ENCODE measurements at regions of chr1 and their contacts with region 1.

Region 1: GRCh38 chr1:88180449-88181108 is 503.5 kb upstream of the PKN2 start:
- DNase-seq: peak; percentile 44
- H3K4me3 ChIP-seq: peak overlapping the region in 1 of 2 experiments; percentile 40; a peak in 1 of 4 replicates
- H3K27ac ChIP-seq: no peak overlapping the region
- H3K4me1 ChIP-seq: peaks cover 0 to 2% of the 10 kb centered on the region in 2 experiments; a peak in 2 of 4 replicates
- H3K27me3 ChIP-seq: no peaks in the 10 kb centered on the region
- CTCF ChIP-seq: peak; percentile 98
- EP300 ChIP-seq: no peak
- RAD21 ChIP-seq: peak; percentile 81

Region 2: GRCh38 chr1:88168126-88168525 is 12.5 kb before region 1 on chr1:
- CTCF ChIA-PET with region 1: interaction called, 20 read pairs
- POLR2A ChIA-PET with region 1: no interaction called
- DNase-seq: no peak
- H3K4me3 ChIP-seq: no peak overlapping the region
- H3K27ac ChIP-seq: no peak overlapping the region
- H3K4me1 ChIP-seq: no peaks in the 10 kb centered on the region
- H3K27me3 ChIP-seq: no peaks in the 10 kb centered on the region; the same call in 1 of the 2 replicates
- CTCF ChIP-seq: no peak
- EP300 ChIP-seq: no peak
- RAD21 ChIP-seq: no peak

Region 3: GRCh38 chr1:88191917-88192316 is 11.3 kb after region 1 on chr1:
- CTCF ChIA-PET with region 1: interaction called, 35 read pairs
- POLR2A ChIA-PET with region 1: no interaction called
- DNase-seq: no peak
- H3K4me3 ChIP-seq: no peak overlapping the region
- H3K27ac ChIP-seq: no peak overlapping the region
- H3K4me1 ChIP-seq: no peaks in the 10 kb centered on the region; a peak in 1 of 4 replicates
- H3K27me3 ChIP-seq: no peaks in the 10 kb centered on the region
- CTCF ChIP-seq: no peak
- EP300 ChIP-seq: no peak
- RAD21 ChIP-seq: no peak

Region 4: DNA sequence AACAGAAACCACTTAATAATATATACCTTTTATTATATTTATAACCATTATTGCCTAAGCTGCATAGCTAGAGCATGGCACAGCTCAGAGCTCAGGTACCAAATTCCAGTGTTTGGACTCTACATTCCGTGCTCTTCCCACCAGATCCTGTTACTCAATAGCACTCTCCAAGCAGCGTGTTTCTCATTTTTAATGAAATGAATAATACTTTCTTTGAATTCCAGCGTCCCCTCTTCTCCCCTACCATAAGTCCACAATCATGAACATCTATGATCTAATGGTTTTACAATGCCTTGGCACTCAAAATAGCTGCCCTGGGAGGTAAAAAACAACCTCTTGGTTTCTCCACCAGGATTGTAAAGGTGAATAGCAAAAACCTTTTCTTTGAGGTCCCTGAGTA is 23.5 kb after region 1 on chr1:
- CTCF ChIA-PET with region 1: interaction called, 33 read pairs
- POLR2A ChIA-PET with region 1: no interaction called
- DNase-seq: no peak
- H3K4me3 ChIP-seq: no peak overlapping the region
- H3K27ac ChIP-seq: no peak overlapping the region
- H3K4me1 ChIP-seq: no peaks in the 10 kb centered on the region; a peak in 1 of 4 replicates
- H3K27me3 ChIP-seq: no peaks in the 10 kb centered on the region
- CTCF ChIP-seq: no peak
- EP300 ChIP-seq: no peak
- RAD21 ChIP-seq: no peak

Region 5: GRCh38 chr1:88224906-88225305 is 44.3 kb after region 1 on chr1:
- CTCF ChIA-PET with region 1: interaction called, 12 read pairs
- POLR2A ChIA-PET with region 1: no interaction called
- DNase-seq: no peak
- H3K4me3 ChIP-seq: no peak overlapping the region
- H3K27ac ChIP-seq: no peak overlapping the region
- H3K4me1 ChIP-seq: no peaks in the 10 kb centered on the region; a peak in 2 of 4 replicates
- H3K27me3 ChIP-seq: no peaks in the 10 kb centered on the region
- CTCF ChIP-seq: no peak
- EP300 ChIP-seq: no peak
- RAD21 ChIP-seq: no peak

Measured in SK-N-SH (cell line).